Esophagus squamous epithelium (tissue), 5 donors: ENCODE measurements at regions of chr4 and their contacts with region 1.

Region 1: GRCh38 chr4:6250235-6250983 is 19.2 kb upstream of the WFS1 start:
- DNase-seq: no peak
- H3K4me3 ChIP-seq: no peak overlapping the region
- H3K27ac ChIP-seq: no peak overlapping the region
- H3K4me1 ChIP-seq: peaks cover 0 to 10% (median 0%) of the 10 kb centered on the region in 3 donors
- H3K27me3 ChIP-seq: peaks cover 0 to 56% (median 2%) of the 10 kb centered on the region in 4 donors
- CTCF ChIP-seq: peak; percentile 47 to 88 (median 82)
- POLR2A ChIP-seq: no peak

Region 2: GRCh38 chr4:6143603-6144181 is 106.7 kb before region 1 on chr4:
- intact Hi-C with region 1: no loop called
- DNase-seq: no peak
- H3K4me3 ChIP-seq: no peak overlapping the region
- H3K27ac ChIP-seq: no peak overlapping the region
- H3K4me1 ChIP-seq: no peaks in the 10 kb centered on the region
- H3K27me3 ChIP-seq: peaks cover 0 to 4% (median 0%) of the 10 kb centered on the region in 4 donors
- CTCF ChIP-seq: no peak
- POLR2A ChIP-seq: no peak

Region 3: GRCh38 chr4:6546681-6547447 is 296.5 kb after region 1 on chr4:
- intact Hi-C with region 1: loop called (anchors 10 kb)
- DNase-seq: no peak
- H3K4me3 ChIP-seq: no peak overlapping the region
- H3K27ac ChIP-seq: no peak overlapping the region
- H3K4me1 ChIP-seq: peaks cover 0 to 8% (median 0%) of the 10 kb centered on the region in 3 donors
- H3K27me3 ChIP-seq: peaks cover 0 to 57% (median 0%) of the 10 kb centered on the region in 4 donors
- CTCF ChIP-seq: peak; percentile 69 to 89 (median 79)
- POLR2A ChIP-seq: no peak